Activated CD8-positive, alpha-beta T cell treated with anti-CD3 and anti-CD28 coated beads, Interleukin-2, amount 10 ng/mL, durations not matched to agents 7 days and 5 days (primary cell): ENCODE measurements at regions of chr9 and their contacts with region 1.

Region 1: DNA sequence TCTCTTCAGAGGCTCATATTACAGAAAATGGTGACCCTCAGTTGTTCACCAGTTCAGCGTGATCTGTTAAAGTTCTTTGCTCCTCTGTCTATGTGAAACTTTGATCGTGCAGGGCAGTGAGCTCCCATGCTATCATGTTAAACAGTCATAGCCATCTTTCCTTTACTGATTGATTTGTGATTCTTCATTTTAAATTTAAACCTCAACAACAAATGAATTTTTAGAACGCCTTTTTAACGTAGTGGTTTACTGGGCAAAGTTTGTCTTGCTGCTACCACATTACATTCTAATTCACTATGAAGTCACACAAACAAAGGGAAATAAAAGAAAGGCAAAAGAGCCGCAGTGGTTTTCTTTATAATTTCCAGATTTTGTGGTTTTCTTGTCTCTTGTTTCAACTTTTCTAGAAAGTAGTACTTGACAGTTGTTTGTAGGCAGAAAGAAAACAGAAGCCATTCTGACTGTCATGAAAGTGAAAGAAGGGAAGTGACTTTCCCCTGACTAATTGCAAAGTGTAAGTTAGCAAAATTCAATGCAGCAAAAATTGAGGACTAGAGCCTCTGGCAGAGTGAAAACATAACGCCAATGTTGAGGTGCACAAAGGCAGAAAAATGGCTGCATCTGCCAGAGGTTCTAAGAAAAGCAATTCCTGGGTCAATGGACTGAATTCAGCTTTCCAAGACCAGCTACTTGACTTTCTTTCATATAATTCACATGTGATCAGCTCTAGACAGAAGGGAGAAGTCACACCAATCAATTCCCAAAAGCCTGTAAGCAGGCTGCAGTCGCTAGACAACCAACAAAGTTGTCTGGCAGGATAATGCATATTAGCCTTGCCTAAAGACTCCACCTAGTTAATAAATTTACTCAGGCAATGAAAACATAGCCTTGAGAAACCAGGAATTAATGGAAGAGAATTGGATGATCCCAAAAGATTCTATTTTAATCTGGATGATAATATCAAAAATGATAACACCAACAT is 7.1 kb upstream of the IFNA6 start:
- DNase-seq: no peak
- ATAC-seq: peak; percentile 81
- H3K4me3 Mint-ChIP-seq: peak overlapping the region; percentile 60
- H3K27ac Mint-ChIP-seq: peak overlapping the region; percentile 88
- H3K4me1 Mint-ChIP-seq: peaks cover 19% of the 10 kb centered on the region
- H3K27me3 Mint-ChIP-seq: peaks cover under 1% of the 10 kb centered on the region

Region 2: DNA sequence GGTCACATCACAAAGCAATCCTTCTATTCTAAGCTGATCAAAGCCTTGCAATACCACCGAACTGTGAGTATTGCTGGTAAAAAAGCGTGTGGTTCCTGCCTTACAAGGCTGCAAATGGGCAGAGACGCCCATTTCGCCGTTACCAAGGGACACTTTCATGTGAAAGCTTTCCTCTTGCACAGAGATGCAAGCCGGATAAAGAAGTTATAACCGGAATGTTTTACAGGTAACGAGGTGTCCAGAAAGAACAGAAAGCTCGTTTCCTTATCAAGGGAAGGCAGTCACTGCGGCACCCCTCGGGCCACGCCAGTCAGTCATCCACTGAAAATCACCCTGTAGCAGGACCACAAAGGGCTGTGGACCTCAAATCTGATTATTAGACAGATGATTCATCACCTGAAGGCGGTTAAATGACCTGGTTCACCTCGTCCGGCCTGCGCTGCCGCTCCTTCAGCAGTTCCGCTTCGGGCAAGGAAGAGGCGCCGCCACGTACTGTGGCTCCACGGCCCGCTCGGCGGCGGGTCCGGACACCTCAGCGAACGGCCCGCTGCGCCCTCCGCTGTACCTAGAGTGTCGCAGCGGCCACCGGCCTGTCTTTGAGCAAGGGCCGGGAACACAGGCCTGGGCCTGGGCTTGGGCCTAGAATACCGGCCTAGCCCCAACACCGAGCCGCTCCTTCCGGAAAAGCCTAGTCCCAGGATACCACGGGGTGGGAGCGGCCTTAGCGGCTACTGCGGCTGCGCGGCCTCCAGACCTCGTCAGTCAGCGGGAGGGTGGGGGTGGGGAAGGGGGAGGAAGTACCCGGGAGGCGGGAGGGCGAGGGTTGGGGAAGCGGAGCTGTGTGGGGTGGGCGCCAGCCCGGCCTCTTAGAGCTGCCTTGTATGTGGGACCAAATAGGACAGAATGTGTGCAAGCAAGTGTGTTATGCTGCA is 22.8 kb before region 1 on chr9 and contains the start of gene KLHL9:
- CTCF ChIA-PET with region 1: interaction called, 4 read pairs
- POLR2A ChIA-PET with region 1: interaction called, 15 read pairs
- DNase-seq: peak; percentile 90
- ATAC-seq: peak; percentile 90
- H3K4me3 Mint-ChIP-seq: peak within 1 kb of the TSS; percentile 89
- H3K27ac Mint-ChIP-seq: peak within 1 kb of the TSS; percentile 91
- H3K4me1 Mint-ChIP-seq: peaks cover 45% of the 10 kb centered on the region
- H3K27me3 Mint-ChIP-seq: peaks cover 11% of the 10 kb centered on the region
- total RNA-seq, gene KLHL9: 17.9 to 18.8 TPM